Heart left ventricle (tissue), 16 donors: ENCODE measurements at regions of chr1 and their contacts with region 1.

Region 1: GRCh38 chr1:5745776-5746610 is 246.2 kb downstream of the NPHP4 start:
- DNase-seq: peak; percentile 46 to 83 (median 61)
- ATAC-seq: peak; percentile 53 to 93 (median 80)
- H3K4me3 ChIP-seq: no peak overlapping the region
- H3K27ac ChIP-seq: no peak overlapping the region
- H3K4me1 ChIP-seq: no peaks in the 10 kb centered on the region
- H3K27me3 ChIP-seq: peaks cover 0 to 51% (median 15%) of the 10 kb centered on the region in 9 donors
- CTCF ChIP-seq: peak; percentile 83 to 94 (median 88)
- POLR2A ChIP-seq: no peak

Region 2: DNA sequence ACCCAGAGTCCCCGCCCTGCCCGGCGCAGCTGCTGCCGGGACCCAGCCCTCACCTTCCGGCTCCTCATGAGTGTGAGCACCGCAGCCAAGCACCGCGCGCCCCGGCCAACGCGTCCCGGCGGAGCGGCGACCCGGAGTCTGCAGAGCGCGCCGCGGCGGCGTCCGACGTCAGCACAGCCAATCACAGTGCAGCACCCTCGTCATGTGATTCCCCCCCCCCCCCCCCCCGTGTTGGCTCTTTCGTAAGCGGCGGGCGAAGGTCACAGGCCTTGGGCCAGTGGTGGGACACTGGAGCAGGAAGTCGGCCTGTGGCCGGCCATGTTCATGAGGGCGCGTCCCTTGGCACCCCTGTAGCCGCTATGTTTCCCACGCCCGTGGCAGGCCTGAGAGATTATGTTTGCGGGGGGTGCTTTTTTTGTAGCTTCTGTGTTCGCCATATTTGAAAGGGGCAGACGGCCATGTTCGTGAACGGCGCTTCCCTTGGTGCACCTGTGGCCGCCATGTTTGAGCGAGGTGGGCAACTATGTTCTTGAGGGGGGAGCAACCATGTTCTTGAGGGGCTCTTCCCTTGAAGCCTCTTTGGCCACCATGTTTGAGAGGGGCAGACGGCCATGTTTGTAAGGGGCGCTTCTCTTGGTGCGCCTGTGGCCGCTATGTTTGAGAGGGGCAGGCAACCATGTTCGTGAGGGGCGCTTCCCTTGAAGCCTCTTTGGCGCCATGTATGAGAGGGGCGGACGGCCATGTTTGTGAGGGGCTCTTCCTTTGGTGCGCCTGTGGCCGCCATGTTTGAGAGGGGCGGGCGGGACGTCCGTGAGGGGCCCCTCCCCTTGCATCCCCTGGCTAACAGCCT is 1845.6 kb before region 1 on chr1 and contains the start of gene C1orf174:
- intact Hi-C with region 1: loop called in 1 of 10 experiments (anchors 10 kb)
- DNase-seq: peak; percentile 96 to 97 (median 97)
- ATAC-seq: peak; percentile 91 to 93 (median 92)
- H3K4me3 ChIP-seq: peak within 1 kb of the TSS; percentile 62 to 98 (median 88)
- H3K27ac ChIP-seq: peak within 1 kb of the TSS; percentile 93 to 100 (median 98)
- H3K4me1 ChIP-seq: peaks cover 0 to 15% (median 8%) of the 10 kb centered on the region in 12 donors
- H3K27me3 ChIP-seq: no peaks in the 10 kb centered on the region
- CTCF ChIP-seq: peak in 1 of 12 donors; percentile 6
- POLR2A ChIP-seq: peak in 1 of 2 donors; percentile 50
- total RNA-seq, gene C1orf174: 8.7 to 16.4 (median 11.3) TPM

Region 3: GRCh38 chr1:3918966-3919611 is 1826.9 kb before region 1 on chr1:
- intact Hi-C with region 1: loop called in 7 of 10 experiments (anchors 5 to 10 kb)
- DNase-seq: peak in 2 of 5 donors; percentile 9 to 49
- ATAC-seq: no peak
- H3K4me3 ChIP-seq: no peak overlapping the region
- H3K27ac ChIP-seq: no peak overlapping the region
- H3K4me1 ChIP-seq: no peaks in the 10 kb centered on the region
- H3K27me3 ChIP-seq: peaks cover 0 to 53% (median 9%) of the 10 kb centered on the region in 9 donors
- CTCF ChIP-seq: no peak
- POLR2A ChIP-seq: no peak

Region 4: DNA sequence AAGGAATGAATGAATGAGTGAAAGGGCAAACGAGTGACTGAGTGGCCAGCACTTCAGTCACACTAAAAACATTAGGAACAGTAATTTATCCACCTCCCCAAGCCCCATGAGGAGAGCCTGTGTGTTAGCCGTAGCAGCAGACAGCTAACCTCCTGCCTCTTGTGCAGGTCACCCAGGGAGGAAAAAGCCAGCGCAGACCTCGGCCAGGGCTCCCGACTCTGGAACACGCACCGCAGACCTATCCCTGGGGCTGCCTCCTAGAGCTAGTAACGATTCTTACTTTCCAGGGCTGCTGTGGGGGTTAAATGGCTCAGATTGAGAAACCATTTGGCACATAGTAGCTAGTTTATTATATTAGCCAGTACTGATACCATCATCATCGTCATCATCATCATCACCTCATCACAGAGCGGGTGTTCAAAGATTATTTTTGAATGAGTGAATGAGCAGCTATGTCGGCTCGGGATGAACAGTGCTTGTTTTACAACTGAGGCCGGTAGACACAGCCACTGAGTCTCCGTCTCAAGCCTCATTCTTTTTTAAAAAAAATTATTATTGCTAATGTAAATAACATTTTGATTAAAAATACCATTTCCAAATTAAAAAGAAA is 1105.2 kb before region 1 on chr1:
- intact Hi-C with region 1: loop called in 1 of 10 experiments (anchors 10 kb)
- DNase-seq: no peak
- ATAC-seq: no peak
- H3K4me3 ChIP-seq: no peak overlapping the region
- H3K27ac ChIP-seq: no peak overlapping the region
- H3K4me1 ChIP-seq: no peaks in the 10 kb centered on the region
- H3K27me3 ChIP-seq: peaks cover 0 to 22% (median 0%) of the 10 kb centered on the region in 9 donors
- CTCF ChIP-seq: no peak
- POLR2A ChIP-seq: no peak

Region 5: GRCh38 chr1:5514519-5515183 is 231.3 kb before region 1 on chr1:
- intact Hi-C with region 1: loop called (anchors 1 to 5 kb)
- DNase-seq: peak; percentile 45 to 82 (median 56)
- ATAC-seq: peak in 3 of 4 donors; percentile 64 to 73 (median 64)
- H3K4me3 ChIP-seq: no peak overlapping the region
- H3K27ac ChIP-seq: no peak overlapping the region
- H3K4me1 ChIP-seq: no peaks in the 10 kb centered on the region
- H3K27me3 ChIP-seq: peaks cover 0 to 38% (median 7%) of the 10 kb centered on the region in 9 donors
- CTCF ChIP-seq: peak; percentile 99 to 100 (median 100)
- POLR2A ChIP-seq: no peak

Region 6: GRCh38 chr1:5651964-5652821 is 93.8 kb before region 1 on chr1:
- intact Hi-C with region 1: no loop called
- DNase-seq: no peak
- ATAC-seq: no peak
- H3K4me3 ChIP-seq: no peak overlapping the region
- H3K27ac ChIP-seq: no peak overlapping the region
- H3K4me1 ChIP-seq: no peaks in the 10 kb centered on the region
- H3K27me3 ChIP-seq: peaks cover 0 to 39% (median 5%) of the 10 kb centered on the region in 9 donors
- CTCF ChIP-seq: no peak
- POLR2A ChIP-seq: no peak

Region 7: GRCh38 chr1:5682626-5683225 is 63.3 kb before region 1 on chr1:
- intact Hi-C with region 1: no loop called
- DNase-seq: no peak
- ATAC-seq: no peak
- H3K4me3 ChIP-seq: no peak overlapping the region
- H3K27ac ChIP-seq: no peak overlapping the region
- H3K4me1 ChIP-seq: no peaks in the 10 kb centered on the region
- H3K27me3 ChIP-seq: peaks cover 0 to 18% (median 0%) of the 10 kb centered on the region in 9 donors
- CTCF ChIP-seq: no peak
- POLR2A ChIP-seq: no peak

Region 8: DNA sequence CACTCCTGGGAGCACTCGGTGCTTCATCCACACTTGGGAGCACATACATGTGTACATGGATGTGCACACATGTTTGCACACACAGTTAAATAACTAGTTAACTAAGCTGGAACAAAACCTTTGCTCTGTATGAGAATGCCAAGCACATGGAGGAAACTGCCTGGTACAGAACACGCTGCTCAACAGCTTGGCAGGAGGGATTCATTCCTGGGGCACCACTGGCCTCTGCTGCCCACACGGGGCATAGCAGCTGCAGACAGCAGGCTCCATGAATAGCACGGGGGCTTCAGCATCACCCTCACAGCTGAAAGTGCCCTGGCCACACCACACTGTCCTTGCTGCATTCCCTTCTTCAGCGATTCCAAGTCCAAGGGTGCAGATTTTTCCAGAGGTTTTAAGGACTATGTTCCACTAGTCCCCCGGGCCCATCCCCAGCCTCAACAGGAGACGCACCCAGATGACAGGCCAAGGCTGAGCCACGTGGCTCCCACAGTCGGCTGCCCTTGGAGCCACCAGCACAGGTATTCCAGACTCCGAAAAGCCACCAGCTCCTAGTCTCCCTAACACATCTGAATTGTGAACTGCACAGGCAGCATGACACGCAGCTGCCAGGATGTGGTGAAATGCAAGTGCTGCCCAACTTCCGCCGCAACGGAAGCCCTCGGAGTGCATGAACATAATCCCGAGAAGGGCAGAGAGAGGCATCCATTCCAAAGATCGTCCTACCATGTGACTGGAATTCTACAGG is 229.3 kb after region 1 on chr1:
- intact Hi-C with region 1: loop called in 1 of 10 experiments (anchors 10 kb)
- DNase-seq: peak in 2 of 5 donors; percentile 55 to 76
- ATAC-seq: peak; percentile 71 to 91 (median 89)
- H3K4me3 ChIP-seq: no peak overlapping the region
- H3K27ac ChIP-seq: no peak overlapping the region
- H3K4me1 ChIP-seq: peaks cover 0 to 5% (median 0%) of the 10 kb centered on the region in 12 donors
- H3K27me3 ChIP-seq: no peaks in the 10 kb centered on the region
- CTCF ChIP-seq: peak; percentile 42 to 70 (median 60)
- POLR2A ChIP-seq: no peak